Tibial artery (tissue), 4 donors: ENCODE measurements at regions of chr19 and their contacts with region 1.

Region 1: DNA sequence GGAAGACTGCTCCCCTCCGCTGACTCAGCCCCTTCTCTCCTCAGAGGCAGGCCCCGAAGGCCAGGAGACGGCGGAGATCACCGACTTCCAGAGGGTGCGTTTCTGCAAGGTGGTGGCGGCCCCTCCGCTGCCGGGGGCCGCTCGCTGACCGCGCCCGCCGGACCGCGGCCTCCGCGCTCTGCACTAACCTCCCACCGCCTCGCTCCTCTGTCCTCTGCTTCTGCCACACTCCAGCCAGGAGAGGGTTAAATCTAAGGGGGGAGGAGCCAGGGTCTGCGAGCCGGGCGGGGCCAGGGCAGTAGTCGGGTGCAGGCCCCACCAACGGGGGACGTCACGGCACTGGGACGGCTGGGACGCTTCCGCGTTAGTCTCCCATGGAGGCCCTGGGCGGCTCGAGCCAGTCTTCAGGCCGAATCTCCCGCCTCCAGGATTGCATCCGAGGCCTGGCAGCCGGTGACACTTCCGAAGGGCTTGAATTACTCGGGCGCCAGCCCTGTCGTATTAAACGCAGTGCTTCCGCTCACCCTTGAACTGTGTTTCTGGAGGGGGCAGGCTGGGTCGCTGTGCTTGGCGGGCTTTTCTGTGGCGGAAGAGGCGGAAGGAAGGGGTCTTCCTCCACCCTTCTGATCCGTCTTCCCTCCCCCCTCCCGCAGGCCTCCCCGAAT is 1.2 kb upstream of the INAFM1 start:
- DNase-seq: peak; percentile 95 to 98
- H3K4me3 ChIP-seq: peak overlapping the region; percentile 76 to 98
- H3K27ac ChIP-seq: peak overlapping the region; percentile 99
- H3K4me1 ChIP-seq: peaks cover 0 to 46% (median 36%) of the 10 kb centered on the region in 4 donors
- H3K27me3 ChIP-seq: no peaks in the 10 kb centered on the region
- CTCF ChIP-seq: peak in 1 of 2 experiments; percentile 11

Region 2: DNA sequence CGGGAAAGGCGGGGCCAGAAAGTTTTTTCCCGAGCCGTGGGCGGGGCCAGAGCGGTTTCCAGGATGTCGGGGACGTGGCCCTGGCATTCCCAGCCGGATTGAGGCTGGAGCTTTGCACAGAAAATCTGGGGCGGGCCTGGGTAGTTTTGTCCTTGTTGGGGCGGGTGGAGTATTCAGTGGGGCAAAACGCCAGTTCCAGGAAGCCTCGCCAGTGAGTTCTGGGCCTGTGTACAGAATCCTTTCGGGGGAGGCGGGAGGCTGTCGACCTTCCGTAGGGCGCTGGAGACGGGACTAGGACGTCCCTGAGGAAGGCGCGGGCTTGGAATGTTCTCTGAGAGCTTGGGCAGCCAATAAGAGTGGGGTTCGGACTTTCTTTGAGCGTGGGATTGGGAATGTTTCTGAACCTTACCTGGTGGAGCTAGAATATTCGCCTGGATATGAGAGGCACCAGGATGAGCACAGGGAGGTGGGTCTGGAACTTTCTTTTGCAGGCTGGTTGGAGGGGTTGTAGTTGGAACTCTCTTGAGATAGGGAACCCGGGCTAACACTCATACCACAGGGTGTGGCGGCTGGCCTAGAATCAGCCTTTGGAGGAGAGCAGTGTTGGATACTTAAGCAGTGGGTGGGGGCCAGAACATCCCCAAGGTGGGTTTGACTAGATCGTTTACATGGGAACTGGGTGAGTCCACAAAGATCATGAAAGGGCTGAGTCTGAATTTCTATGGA is 15.8 kb before region 1 on chr19:
- intact Hi-C with region 1: loop called (anchors 2 kb)
- DNase-seq: peak in 1 of 2 donors; percentile 59
- H3K4me3 ChIP-seq: peak overlapping the region; percentile 55 to 63
- H3K27ac ChIP-seq: peak overlapping the region; percentile 86 to 91
- H3K4me1 ChIP-seq: peaks cover 0 to 40% (median 25%) of the 10 kb centered on the region in 4 donors
- H3K27me3 ChIP-seq: no peaks in the 10 kb centered on the region
- CTCF ChIP-seq: no peak

Region 3: DNA sequence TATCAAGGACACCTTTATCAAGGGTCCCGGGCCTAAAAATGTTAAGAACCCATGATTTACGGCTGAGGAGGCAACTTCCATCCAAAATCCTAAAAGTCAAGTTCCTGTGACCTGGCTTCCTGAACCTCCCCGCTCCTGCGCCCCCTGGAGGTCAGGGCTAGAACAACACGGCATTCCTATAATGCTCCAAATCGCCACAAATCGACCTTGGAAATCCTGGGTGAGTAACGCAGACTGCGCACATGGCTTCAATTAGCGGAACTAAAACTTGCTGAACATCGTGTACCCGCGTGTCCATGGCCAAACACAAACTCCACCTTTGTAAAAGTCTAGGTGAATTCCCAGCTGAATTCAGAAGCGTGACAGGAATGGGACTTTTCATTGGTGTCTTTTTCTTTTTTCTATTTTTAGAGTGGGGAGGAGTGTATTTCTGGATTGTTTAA is 31.9 kb after region 1 on chr19:
- intact Hi-C with region 1: no loop called
- DNase-seq: peak; percentile 71 to 90
- H3K4me3 ChIP-seq: no peak overlapping the region
- H3K27ac ChIP-seq: peak overlapping the region in 1 of 2 donors; percentile 16
- H3K4me1 ChIP-seq: peaks cover 0 to 38% (median 12%) of the 10 kb centered on the region in 4 donors
- H3K27me3 ChIP-seq: no peaks in the 10 kb centered on the region
- CTCF ChIP-seq: peak; percentile 81 to 92